Adrenal gland (tissue), 19 donors: ENCODE measurements at regions of chr3 and their contacts with region 1.

Region 1: GRCh38 chr3:73086071-73086494 is 24.6 kb downstream of the EBLN2 start:
- DNase-seq: peak; percentile 29 to 73 (median 54)
- H3K4me3 ChIP-seq: no peak overlapping the region
- H3K27ac ChIP-seq: no peak overlapping the region
- H3K4me1 ChIP-seq: peaks cover 0 to 8% of the 10 kb centered on the region in 2 donors
- H3K27me3 ChIP-seq: no peaks in the 10 kb centered on the region
- CTCF ChIP-seq: peak; percentile 72 to 88 (median 84)
- POLR2A ChIP-seq: no peak

Region 2: GRCh38 chr3:71875461-71875947 is 1210.6 kb before region 1 on chr3:
- intact Hi-C with region 1: loop called in 1 of 2 experiments (anchors 10 kb)
- DNase-seq: peak; percentile 83 to 92 (median 86)
- H3K4me3 ChIP-seq: no peak overlapping the region
- H3K27ac ChIP-seq: no peak overlapping the region
- H3K4me1 ChIP-seq: peaks cover 0 to 4% of the 10 kb centered on the region in 2 donors
- H3K27me3 ChIP-seq: no peaks in the 10 kb centered on the region
- CTCF ChIP-seq: peak; percentile 76 to 94 (median 88)
- POLR2A ChIP-seq: no peak

Region 3: DNA sequence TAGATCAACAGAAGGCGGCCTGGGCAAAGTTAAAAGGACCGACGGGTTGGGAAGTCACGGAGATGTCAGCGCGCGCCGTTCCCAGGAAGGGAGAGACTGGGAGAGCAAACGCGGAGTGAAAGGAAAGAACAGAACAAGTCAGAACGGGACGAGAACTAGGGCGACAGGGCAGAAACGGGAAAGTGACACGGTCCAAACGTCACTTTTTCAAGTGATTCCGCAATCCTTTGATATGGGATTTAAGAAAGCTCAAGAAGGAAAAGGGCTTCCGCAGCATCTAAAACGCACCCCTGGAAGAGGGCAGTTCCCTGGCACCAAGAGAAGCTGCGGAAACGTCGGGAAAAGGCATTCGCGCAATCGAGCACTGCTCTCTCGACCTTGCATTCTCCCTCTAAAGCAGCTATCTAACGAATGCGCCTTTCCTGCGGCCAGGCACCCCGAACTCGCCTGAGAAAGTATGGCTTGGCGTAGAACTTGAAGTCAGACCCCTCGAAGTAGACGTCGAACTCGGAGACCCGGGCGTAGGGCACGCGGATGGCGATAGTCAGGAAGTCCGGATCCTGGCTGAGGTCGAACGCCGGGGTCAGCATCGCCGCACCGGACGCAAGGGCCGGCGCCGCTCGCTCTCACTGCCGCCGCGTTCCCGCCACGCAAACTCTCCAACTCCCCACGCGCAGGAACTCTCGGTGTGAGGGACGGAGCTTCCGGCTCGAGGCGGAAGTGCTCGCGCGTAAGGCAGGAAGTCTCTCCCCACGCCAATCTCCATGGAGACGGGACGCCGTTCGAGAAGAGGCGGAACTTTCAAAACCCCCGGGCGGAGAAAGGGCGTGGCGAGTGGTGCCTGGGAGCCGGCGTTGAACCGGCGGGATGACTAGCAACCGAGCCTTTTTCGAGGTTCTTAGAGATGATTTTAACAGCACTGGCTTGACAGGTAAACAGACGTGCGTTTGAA is 238.1 kb before region 1 on chr3 and contains the start of gene SHQ1:
- intact Hi-C with region 1: loop called (anchors 10 kb)
- DNase-seq: peak; percentile 96 to 98 (median 96)
- H3K4me3 ChIP-seq: peak within 1 kb of the TSS; percentile 36 to 91 (median 69)
- H3K27ac ChIP-seq: peak within 1 kb of the TSS; percentile 9 to 94 (median 66)
- H3K4me1 ChIP-seq: peaks cover 10 to 36% of the 10 kb centered on the region in 2 donors
- H3K27me3 ChIP-seq: no peaks in the 10 kb centered on the region
- CTCF ChIP-seq: no peak
- POLR2A ChIP-seq: peak; percentile 23 to 63
- total RNA-seq, gene SHQ1: 11.4 to 26.4 (median 15.6) TPM

Region 4: DNA sequence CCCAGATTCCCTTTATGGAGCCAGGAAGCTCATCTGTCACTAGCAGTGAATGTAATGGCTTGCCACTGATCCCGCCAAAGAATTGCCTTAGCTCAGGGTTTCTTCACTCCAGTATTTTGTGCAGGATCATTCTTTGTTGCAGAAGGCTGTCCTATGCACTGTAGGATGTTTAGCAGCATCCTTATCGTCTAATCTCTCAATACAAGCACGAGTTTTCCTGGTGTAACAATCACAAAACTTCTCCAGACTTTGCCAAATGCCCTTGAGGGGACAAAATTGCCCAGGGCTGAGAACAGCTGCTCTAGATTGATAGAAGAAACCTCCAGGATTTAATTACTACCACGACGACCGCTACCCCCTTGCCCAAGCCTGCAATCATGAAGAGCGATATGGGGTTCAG is 231.1 kb before region 1 on chr3:
- intact Hi-C with region 1: loop called in 1 of 2 experiments (anchors 10 kb)
- DNase-seq: no peak
- H3K4me3 ChIP-seq: no peak overlapping the region
- H3K27ac ChIP-seq: no peak overlapping the region
- H3K4me1 ChIP-seq: peaks cover 0 to 3% of the 10 kb centered on the region in 2 donors
- H3K27me3 ChIP-seq: no peaks in the 10 kb centered on the region
- CTCF ChIP-seq: no peak
- POLR2A ChIP-seq: no peak

Region 5: GRCh38 chr3:72938471-72939265 is 147.4 kb before region 1 on chr3:
- intact Hi-C with region 1: loop called in 1 of 2 experiments (anchors 10 kb)
- DNase-seq: peak; percentile 51 to 91 (median 85)
- H3K4me3 ChIP-seq: no peak overlapping the region
- H3K27ac ChIP-seq: peak overlapping the region; percentile 29 to 76 (median 43)
- H3K4me1 ChIP-seq: peaks cover 0 to 10% of the 10 kb centered on the region in 2 donors
- H3K27me3 ChIP-seq: no peaks in the 10 kb centered on the region
- CTCF ChIP-seq: peak; percentile 50 to 100 (median 88)
- POLR2A ChIP-seq: no peak

Region 6: GRCh38 chr3:72999951-73000350 is 86.1 kb before region 1 on chr3:
- intact Hi-C with region 1: no loop called
- DNase-seq: no peak
- H3K4me3 ChIP-seq: peak overlapping the region in 1 of 4 donors; percentile 86
- H3K27ac ChIP-seq: no peak overlapping the region
- H3K4me1 ChIP-seq: peaks cover 45 to 56% of the 10 kb centered on the region in 2 donors
- H3K27me3 ChIP-seq: no peaks in the 10 kb centered on the region
- CTCF ChIP-seq: no peak
- POLR2A ChIP-seq: no peak